Heart right ventricle (tissue), 16 donors: ENCODE measurements at regions of chr12 and their contacts with region 1.

Region 1: DNA sequence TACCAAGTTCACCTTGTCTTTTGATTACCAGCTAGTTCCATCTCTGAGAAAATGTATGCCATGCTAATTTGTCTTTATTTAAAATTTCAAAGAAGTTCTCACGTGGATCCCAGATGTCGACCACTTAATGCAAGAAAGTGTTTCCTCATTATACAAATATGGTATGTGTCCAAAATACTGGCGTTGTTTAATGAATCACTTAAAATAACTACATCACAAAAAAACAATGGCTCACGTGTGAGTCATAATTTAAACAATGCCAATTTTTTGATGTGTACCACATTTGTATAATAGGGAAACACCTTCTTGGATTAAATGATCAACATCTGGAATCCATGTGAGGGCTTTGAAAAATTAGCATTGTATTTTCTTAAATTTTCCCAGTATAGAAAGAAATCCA is 40.8 kb downstream of the DBX2 start:
- DNase-seq: no peak
- ATAC-seq: no peak
- H3K4me3 ChIP-seq: no peak overlapping the region
- H3K27ac ChIP-seq: no peak overlapping the region
- H3K4me1 ChIP-seq: no peaks in the 10 kb centered on the region
- H3K27me3 ChIP-seq: no peaks in the 10 kb centered on the region
- CTCF ChIP-seq: no peak

Region 2: GRCh38 chr12:44143175-44143574 is 866.9 kb before region 1 on chr12:
- intact Hi-C with region 1: loop called in 1 of 10 experiments (anchors 5 kb)
- DNase-seq: no peak
- ATAC-seq: no peak
- H3K4me3 ChIP-seq: no peak overlapping the region
- H3K27ac ChIP-seq: no peak overlapping the region
- H3K4me1 ChIP-seq: no peaks in the 10 kb centered on the region
- H3K27me3 ChIP-seq: no peaks in the 10 kb centered on the region
- CTCF ChIP-seq: no peak

Region 3: DNA sequence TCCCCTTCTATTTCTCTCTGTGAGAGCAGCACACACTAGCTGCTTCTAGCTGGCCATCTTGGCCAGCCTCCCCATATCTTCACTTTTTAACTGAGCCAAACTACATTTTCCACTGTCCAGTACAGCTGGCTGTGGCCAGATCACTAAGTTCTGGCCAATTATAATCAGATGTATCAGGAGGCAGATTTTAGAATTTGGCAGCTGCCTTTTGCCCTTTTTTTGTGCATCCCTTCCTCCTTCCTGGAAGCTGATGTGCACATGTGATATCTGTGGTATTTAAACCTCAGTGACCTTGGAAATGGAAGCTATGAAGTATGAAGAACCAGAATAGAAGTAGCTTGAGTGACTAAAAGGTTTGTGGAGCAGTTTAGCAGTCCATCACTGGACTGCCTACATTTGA is 156.0 kb after region 1 on chr12:
- intact Hi-C with region 1: no loop called
- DNase-seq: no peak
- ATAC-seq: peak in 6 of 8 donors; percentile 26 to 71 (median 58)
- H3K4me3 ChIP-seq: no peak overlapping the region
- H3K27ac ChIP-seq: peak overlapping the region in 1 of 10 donors; percentile 2
- H3K4me1 ChIP-seq: peaks cover 0 to 19% (median 0%) of the 10 kb centered on the region in 9 donors
- H3K27me3 ChIP-seq: no peaks in the 10 kb centered on the region
- CTCF ChIP-seq: no peak